ENCODE measurements at regions of chr12 and their contacts with region 1.

Region 1: GRCh38 chr12:80025638-80026037 is 73.7 kb upstream of the OTOGL start:
- DNase-seq: no peak
- H3K4me3 ChIP-seq: no peak overlapping the region
- CTCF ChIP-seq: no peak

Region 2: GRCh38 chr12:79993106-79993862 is 32.4 kb before region 1 on chr12:
- in situ Hi-C with region 1: loop called (anchors 5 kb)
- DNase-seq: no peak
- H3K4me3 ChIP-seq: no peak overlapping the region
- CTCF ChIP-seq: no peak